GM12878 (cell line): ENCODE measurements at regions of chr3 and their contacts with region 1.

Region 1: GRCh38 chr3:112333002-112333380 is at the start of gene CD200:
- DNase-seq: no peak
- ATAC-seq: peak; percentile 70
- H3K4me3 ChIP-seq: peak within 1 kb of the TSS; percentile 96
- H3K27ac ChIP-seq: peak within 1 kb of the TSS; percentile 74
- H3K4me1 ChIP-seq: no peaks in the 10 kb centered on the region
- H3K27me3 ChIP-seq: no peaks in the 10 kb centered on the region
- CTCF ChIP-seq: no peak
- EP300 ChIP-seq: no peak
- POLR2A ChIP-seq: peak; percentile 83
- RAD21 ChIP-seq: no peak
- polyA plus RNA-seq, gene CD200: 39.8 to 44.0 TPM

Region 2: GRCh38 chr3:111904376-111905241 is 428.4 kb before region 1 on chr3:
- CTCF ChIA-PET with region 1: no interaction called
- POLR2A ChIA-PET with region 1: no interaction called
- RAD21 ChIA-PET with region 1: no interaction called
- SMC1A ChIA-PET with region 1: no interaction called
- in situ Hi-C with region 1: no loop called
- intact Hi-C with region 1: no loop called
- DNase-seq: no peak
- ATAC-seq: no peak
- H3K4me3 ChIP-seq: no peak overlapping the region
- H3K27ac ChIP-seq: no peak overlapping the region
- H3K4me1 ChIP-seq: no peaks in the 10 kb centered on the region
- H3K27me3 ChIP-seq: no peaks in the 10 kb centered on the region
- CTCF ChIP-seq: no peak
- EP300 ChIP-seq: no peak
- POLR2A ChIP-seq: no peak
- RAD21 ChIP-seq: no peak

Region 3: DNA sequence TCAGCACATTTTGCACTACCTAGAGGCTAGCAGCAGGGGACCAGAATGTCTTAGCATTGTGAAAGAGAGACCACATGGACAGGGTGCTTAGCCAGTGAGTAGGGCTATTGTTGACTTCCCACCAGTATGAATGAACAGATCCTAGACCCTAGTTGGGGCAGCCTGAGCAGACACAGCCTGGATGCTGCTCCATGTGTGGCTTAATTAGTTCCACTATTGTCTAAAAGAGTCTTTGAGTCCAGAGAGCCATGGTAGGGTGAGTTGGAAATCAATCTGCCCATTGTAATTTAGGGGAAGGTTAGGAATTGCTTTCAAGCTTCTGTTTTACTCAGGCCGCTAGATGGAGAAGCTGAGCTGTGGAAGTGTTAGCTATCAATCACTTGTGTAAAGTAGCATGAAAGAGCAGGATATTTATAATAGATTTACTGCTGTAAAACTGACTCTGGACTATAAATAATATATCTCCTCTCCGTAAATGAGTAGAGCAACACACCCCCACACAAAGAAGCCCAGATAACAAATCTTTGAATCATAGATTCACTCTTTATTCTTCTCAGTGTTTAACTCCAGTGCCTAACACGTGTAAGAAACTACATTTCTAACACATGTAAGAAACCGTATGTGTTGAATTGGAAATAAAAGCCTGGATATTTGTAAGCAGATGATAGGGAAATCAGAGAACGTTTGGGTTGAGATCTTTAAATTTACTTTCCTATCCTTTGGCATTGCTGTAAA is 195.9 kb before region 1 on chr3:
- CTCF ChIA-PET with region 1: interaction called, 16 read pairs
- POLR2A ChIA-PET with region 1: interaction called, 10 read pairs
- RAD21 ChIA-PET with region 1: interaction called, 28 read pairs
- SMC1A ChIA-PET with region 1: interaction called, 43 read pairs
- in situ Hi-C with region 1: no loop called
- intact Hi-C with region 1: no loop called
- DNase-seq: no peak
- ATAC-seq: peak; percentile 42
- H3K4me3 ChIP-seq: no peak overlapping the region
- H3K27ac ChIP-seq: peak overlapping the region; percentile 99
- H3K4me1 ChIP-seq: peaks cover 47% of the 10 kb centered on the region
- H3K27me3 ChIP-seq: no peaks in the 10 kb centered on the region
- CTCF ChIP-seq: peak; percentile 67 to 88 (median 81); a peak in 5 of 6 replicates
- EP300 ChIP-seq: 0 out of 4 replicates have a peak, but pooled peaks of 1 of the 2 experiments have one; percentile 32
- POLR2A ChIP-seq: peak; percentile 67
- RAD21 ChIP-seq: peak; percentile 94

Region 4: GRCh38 chr3:112364291-112364690 is 31.3 kb after region 1 on chr3:
- CTCF ChIA-PET with region 1: interaction called, 8 read pairs
- POLR2A ChIA-PET with region 1: interaction called, 29 read pairs
- RAD21 ChIA-PET with region 1: interaction called, 20 read pairs
- SMC1A ChIA-PET with region 1: interaction called, 99 read pairs
- in situ Hi-C with region 1: no loop called
- intact Hi-C with region 1: no loop called
- DNase-seq: no peak
- ATAC-seq: peak; percentile 79
- H3K4me3 ChIP-seq: peak overlapping the region; percentile 26; the same call in 1 of the 2 replicates
- H3K27ac ChIP-seq: peak overlapping the region; percentile 84
- H3K4me1 ChIP-seq: peaks cover 29% of the 10 kb centered on the region
- H3K27me3 ChIP-seq: no peaks in the 10 kb centered on the region
- CTCF ChIP-seq: no peak
- EP300 ChIP-seq: no peak
- POLR2A ChIP-seq: no peak
- RAD21 ChIP-seq: no peak

Region 5: DNA sequence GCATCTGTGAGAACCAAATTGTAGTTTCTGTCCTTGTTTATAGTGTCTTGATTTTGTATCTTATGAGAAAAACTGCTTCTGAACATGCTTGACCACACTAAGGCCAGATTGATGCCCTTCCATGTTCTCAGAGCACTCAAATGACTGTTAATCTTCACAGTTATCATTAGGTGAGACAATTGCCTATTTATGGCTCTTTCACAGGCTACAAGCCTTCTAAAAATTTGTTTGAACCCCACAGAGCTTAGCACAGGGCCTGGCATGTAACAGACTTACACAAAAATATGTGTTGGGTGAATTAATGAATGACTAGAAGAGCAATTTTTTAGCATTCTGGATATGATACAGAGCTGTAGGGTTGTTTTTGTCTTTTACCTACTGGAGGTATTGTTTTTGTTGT is 123.2 kb after region 1 on chr3:
- CTCF ChIA-PET with region 1: interaction called, 8 read pairs
- POLR2A ChIA-PET with region 1: interaction called, 7 read pairs
- RAD21 ChIA-PET with region 1: interaction called, 31 read pairs
- SMC1A ChIA-PET with region 1: interaction called, 30 read pairs
- in situ Hi-C with region 1: no loop called
- intact Hi-C with region 1: loop called (anchors 2 kb)
- DNase-seq: no peak
- ATAC-seq: peak; percentile 46
- H3K4me3 ChIP-seq: no peak overlapping the region
- H3K27ac ChIP-seq: peak overlapping the region; percentile 61
- H3K4me1 ChIP-seq: peaks cover 17% of the 10 kb centered on the region
- H3K27me3 ChIP-seq: no peaks in the 10 kb centered on the region
- CTCF ChIP-seq: no peak
- EP300 ChIP-seq: peak; percentile 59 to 68; a peak in 1 of 4 replicates
- POLR2A ChIP-seq: no peak
- RAD21 ChIP-seq: peak; percentile 21; the same call in 1 of the 2 replicates

Region 6: GRCh38 chr3:112498914-112499711 is 166.1 kb after region 1 on chr3 and contains the start of gene BTLA:
- CTCF ChIA-PET with region 1: interaction called, 9 read pairs
- POLR2A ChIA-PET with region 1: interaction called, 33 read pairs
- RAD21 ChIA-PET with region 1: interaction called, 77 read pairs
- SMC1A ChIA-PET with region 1: interaction called, 68 read pairs
- in situ Hi-C with region 1: no loop called
- intact Hi-C with region 1: no loop called
- DNase-seq: peak; percentile 79
- ATAC-seq: peak; percentile 64
- H3K4me3 ChIP-seq: peak within 1 kb of the TSS; percentile 89
- H3K27ac ChIP-seq: peak within 1 kb of the TSS; percentile 87
- H3K4me1 ChIP-seq: peaks cover 13% of the 10 kb centered on the region
- H3K27me3 ChIP-seq: no peaks in the 10 kb centered on the region
- CTCF ChIP-seq: no peak
- EP300 ChIP-seq: peak in 1 of 2 experiments; percentile 39; a peak in 1 of 4 replicates
- POLR2A ChIP-seq: peak; percentile 52; the same call in 1 of the 2 replicates
- RAD21 ChIP-seq: no peak
- polyA plus RNA-seq, gene BTLA: 101 to 134 TPM

Region 7: GRCh38 chr3:112734718-112735350 is 401.8 kb after region 1 on chr3:
- CTCF ChIA-PET with region 1: no interaction called
- POLR2A ChIA-PET with region 1: no interaction called
- RAD21 ChIA-PET with region 1: no interaction called
- SMC1A ChIA-PET with region 1: no interaction called
- in situ Hi-C with region 1: no loop called
- intact Hi-C with region 1: no loop called
- DNase-seq: peak; percentile 40
- ATAC-seq: peak; percentile 94
- H3K4me3 ChIP-seq: no peak overlapping the region
- H3K27ac ChIP-seq: no peak overlapping the region
- H3K4me1 ChIP-seq: no peaks in the 10 kb centered on the region
- H3K27me3 ChIP-seq: no peaks in the 10 kb centered on the region; a peak in 1 of 4 replicates
- CTCF ChIP-seq: peak; percentile 71 to 84 (median 71)
- EP300 ChIP-seq: no peak
- POLR2A ChIP-seq: no peak
- RAD21 ChIP-seq: peak; percentile 91